Activated CD4-positive, alpha-beta T cell treated with anti-CD3 and anti-CD28 coated beads for 36 hours (primary cell): ENCODE measurements at regions of chr6 and their contacts with region 1.

Region 1: GRCh38 chr6:158649289-158650143 is at the start of gene SYTL3:
- DNase-seq: peak; percentile 93
- ATAC-seq: peak; percentile 62
- H3K4me3 Mint-ChIP-seq: peak within 1 kb of the TSS; percentile 81
- H3K27ac Mint-ChIP-seq: peak within 1 kb of the TSS; percentile 88
- H3K4me1 Mint-ChIP-seq: peaks cover 72% of the 10 kb centered on the region
- H3K27me3 Mint-ChIP-seq: no peaks in the 10 kb centered on the region
- total RNA-seq, gene SYTL3: 163 to 180 TPM

Region 2: DNA sequence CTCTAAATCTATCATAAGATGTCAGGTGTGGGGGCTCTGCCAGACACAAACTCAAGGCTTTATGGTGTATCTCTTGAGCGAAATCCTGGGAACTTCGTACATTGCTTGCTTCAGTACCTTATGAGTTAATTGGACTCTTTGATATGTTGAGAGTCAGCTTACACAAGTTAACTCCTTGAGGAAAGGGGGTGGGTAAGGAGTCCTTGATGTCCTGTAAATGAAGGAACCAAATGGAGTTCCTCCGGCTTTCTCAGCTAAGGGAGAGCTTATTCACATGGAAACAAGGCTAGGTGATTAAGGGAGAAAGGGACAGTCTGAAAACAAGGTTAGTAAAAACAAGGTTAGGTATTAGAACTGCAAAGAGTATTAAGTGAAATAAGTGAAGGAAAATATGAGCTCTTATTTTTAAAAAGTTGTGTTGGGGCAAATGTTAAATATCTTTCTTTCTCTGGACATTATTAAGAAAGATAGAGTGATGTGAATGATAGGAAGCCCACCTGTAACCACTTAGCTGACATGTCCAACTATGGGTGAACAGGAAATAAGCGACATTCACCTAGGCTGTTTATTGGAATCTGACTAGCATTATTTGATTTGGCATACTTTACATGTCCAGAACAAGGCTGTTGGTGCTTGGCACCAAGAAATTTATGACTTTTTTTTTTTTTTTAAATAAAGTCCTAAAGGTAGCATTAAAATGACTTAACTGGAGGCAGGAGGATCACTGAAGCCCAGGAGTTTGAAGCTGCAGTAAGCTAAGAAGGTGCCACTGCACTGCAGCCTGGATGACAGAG is 454.8 kb before region 1 on chr6:
- CTCF ChIA-PET with region 1: no interaction called
- POLR2A ChIA-PET with region 1: interaction called, 10 read pairs
- intact Hi-C with region 1: no loop called
- DNase-seq: no peak
- ATAC-seq: no peak
- H3K4me3 Mint-ChIP-seq: no peak overlapping the region
- H3K27ac Mint-ChIP-seq: no peak overlapping the region
- H3K4me1 Mint-ChIP-seq: no peaks in the 10 kb centered on the region
- H3K27me3 Mint-ChIP-seq: no peaks in the 10 kb centered on the region

Region 3: DNA sequence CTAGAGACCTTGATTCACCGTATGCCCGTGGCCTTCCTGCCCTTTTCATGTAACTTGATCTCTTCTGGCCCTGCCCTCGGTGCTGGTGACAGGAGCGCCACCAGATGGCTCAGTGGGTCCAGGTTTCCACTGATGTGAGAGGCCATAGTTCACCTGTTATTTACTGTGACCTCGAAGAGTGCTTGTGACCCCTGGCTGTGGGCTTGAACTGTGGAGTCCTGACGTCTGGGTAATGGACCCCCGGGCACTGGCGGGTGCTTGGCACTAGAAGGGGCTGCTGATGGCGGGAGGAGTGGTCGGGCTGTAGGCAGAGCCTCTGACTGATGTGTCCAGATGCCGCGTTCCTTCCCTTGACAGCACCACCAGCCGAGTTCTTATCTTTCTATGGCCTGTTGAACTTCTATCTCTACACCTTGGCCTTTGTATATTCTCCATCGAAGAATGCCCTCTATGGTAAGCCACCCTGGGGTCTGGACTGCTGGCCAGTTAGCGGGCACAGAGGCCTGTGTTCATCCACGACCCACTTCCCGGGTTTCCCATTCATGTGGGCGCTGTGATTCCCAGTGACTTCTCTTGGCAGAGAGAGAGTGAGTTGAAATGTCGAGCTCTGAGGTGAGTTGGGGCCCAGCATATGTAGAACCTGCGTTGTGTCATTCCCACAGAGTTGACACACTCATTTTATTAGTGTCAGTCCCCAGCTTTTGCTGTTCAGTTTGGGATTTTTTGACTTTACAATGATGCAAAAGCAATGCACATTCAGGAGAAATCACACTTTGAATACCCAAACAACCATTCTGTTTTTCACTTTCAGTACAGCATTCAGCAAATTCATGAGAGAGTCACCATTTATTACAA is 19.9 kb before region 1 on chr6:
- CTCF ChIA-PET with region 1: interaction called, 3 read pairs
- POLR2A ChIA-PET with region 1: interaction called, 21 read pairs
- intact Hi-C with region 1: no loop called
- DNase-seq: peak; percentile 62
- ATAC-seq: peak; percentile 77
- H3K4me3 Mint-ChIP-seq: no peak overlapping the region
- H3K27ac Mint-ChIP-seq: peak overlapping the region; percentile 69
- H3K4me1 Mint-ChIP-seq: peaks cover 38% of the 10 kb centered on the region
- H3K27me3 Mint-ChIP-seq: no peaks in the 10 kb centered on the region

Region 4: DNA sequence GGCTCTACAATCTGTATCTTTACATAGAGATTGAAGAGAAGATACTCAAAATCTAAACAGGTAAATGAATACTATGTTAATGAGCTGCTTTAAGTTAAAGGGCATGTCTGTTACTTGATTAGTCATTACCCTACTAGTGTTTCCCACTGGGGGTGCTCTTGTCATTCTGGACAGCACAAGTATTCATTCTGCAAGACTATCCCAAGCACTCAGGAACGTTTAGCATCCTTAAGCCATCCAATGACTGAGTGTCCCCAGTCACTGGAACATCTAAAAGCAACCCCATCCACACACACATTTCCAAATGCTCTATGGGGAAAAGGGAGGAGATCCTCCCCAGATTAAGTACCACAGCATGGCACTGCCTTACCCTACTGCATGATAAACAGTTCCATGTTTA is 143.9 kb after region 1 on chr6:
- CTCF ChIA-PET with region 1: no interaction called
- POLR2A ChIA-PET with region 1: no interaction called
- intact Hi-C with region 1: no loop called
- DNase-seq: no peak
- ATAC-seq: peak; percentile 74
- H3K4me3 Mint-ChIP-seq: no peak overlapping the region
- H3K27ac Mint-ChIP-seq: peak overlapping the region; percentile 53
- H3K4me1 Mint-ChIP-seq: peaks cover 87% of the 10 kb centered on the region
- H3K27me3 Mint-ChIP-seq: no peaks in the 10 kb centered on the region

Region 5: GRCh38 chr6:158869826-158870648 is 220.5 kb after region 1 on chr6:
- CTCF ChIA-PET with region 1: interaction called, 4 read pairs
- POLR2A ChIA-PET with region 1: interaction called, 14 read pairs
- intact Hi-C with region 1: loop called in 1 of 2 experiments (anchors 1 kb)
- DNase-seq: peak; percentile 98
- ATAC-seq: peak; percentile 90
- H3K4me3 Mint-ChIP-seq: peak overlapping the region; percentile 75
- H3K27ac Mint-ChIP-seq: peak overlapping the region; percentile 95
- H3K4me1 Mint-ChIP-seq: peaks cover 37% of the 10 kb centered on the region
- H3K27me3 Mint-ChIP-seq: no peaks in the 10 kb centered on the region

Region 6: DNA sequence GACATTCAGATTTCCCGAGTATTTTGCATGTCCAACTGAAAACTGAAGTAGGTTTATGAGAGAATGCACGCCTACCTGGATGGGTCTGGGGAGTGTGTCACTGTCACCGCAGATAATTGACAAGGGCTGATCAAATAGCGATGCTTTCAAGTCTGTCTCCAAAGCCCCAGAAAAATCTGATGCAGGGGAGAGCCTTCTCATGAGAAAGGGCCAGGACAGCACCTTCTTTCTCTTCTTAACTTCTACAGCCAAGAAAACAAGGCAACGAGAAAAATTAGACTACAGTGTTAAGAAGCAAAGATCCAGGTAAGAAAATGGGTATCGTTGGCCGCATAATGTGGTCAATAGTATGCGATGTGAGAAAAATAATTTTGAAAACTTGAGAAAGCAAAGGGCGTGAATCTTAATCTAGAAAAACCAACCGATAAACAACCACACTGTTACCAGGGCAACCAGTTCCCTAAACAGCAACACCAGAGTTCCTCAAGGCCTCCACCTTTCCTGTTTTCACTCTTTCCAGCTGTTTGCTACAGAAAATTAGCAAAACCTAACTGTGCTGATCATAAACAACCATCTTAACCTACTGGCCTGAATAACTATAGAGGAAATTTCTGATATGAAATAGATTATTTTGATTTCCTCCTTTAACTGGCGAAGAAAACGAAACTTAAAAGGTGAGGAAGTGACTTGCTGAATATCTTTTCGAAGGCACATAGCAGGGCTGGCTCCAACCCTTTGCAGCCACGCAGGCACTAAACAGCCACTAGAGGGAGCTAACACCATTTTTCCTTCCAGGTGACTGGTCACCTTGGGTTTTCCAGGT is 392.7 kb after region 1 on chr6:
- CTCF ChIA-PET with region 1: no interaction called
- POLR2A ChIA-PET with region 1: interaction called, 5 read pairs
- intact Hi-C with region 1: loop called (anchors 1 to 5 kb)
- DNase-seq: peak; percentile 84
- ATAC-seq: peak; percentile 39
- H3K4me3 Mint-ChIP-seq: peak overlapping the region; percentile 87
- H3K27ac Mint-ChIP-seq: peak overlapping the region; percentile 97
- H3K4me1 Mint-ChIP-seq: peaks cover 71% of the 10 kb centered on the region
- H3K27me3 Mint-ChIP-seq: no peaks in the 10 kb centered on the region

Region 7: GRCh38 chr6:159693128-159693893 is 1043.8 kb after region 1 on chr6 and contains the start of gene SOD2:
- CTCF ChIA-PET with region 1: no interaction called
- POLR2A ChIA-PET with region 1: no interaction called
- intact Hi-C with region 1: loop called in 1 of 2 experiments (anchors 5 kb)
- DNase-seq: peak; percentile 90
- ATAC-seq: peak; percentile 75
- H3K4me3 Mint-ChIP-seq: peak within 1 kb of the TSS; percentile 92
- H3K27ac Mint-ChIP-seq: peak within 1 kb of the TSS; percentile 93
- H3K4me1 Mint-ChIP-seq: peaks cover 44% of the 10 kb centered on the region
- H3K27me3 Mint-ChIP-seq: no peaks in the 10 kb centered on the region
- total RNA-seq, gene SOD2: 90.6 to 105 TPM